T-cell (primary cell): ENCODE measurements at regions of chr1 and their contacts with region 1.

Region 1: GRCh38 chr1:11719313-11720032 is 16.5 kb upstream of the AGTRAP start:
- DNase-seq: peak; percentile 67 to 94 (median 83)
- ATAC-seq: peak; percentile 89 to 92 (median 91)
- H3K4me3 ChIP-seq: peak overlapping the region; percentile 61 to 65
- H3K4me3 Mint-ChIP-seq: peak overlapping the region; percentile 79 to 88 (median 83)
- H3K27ac ChIP-seq: peak overlapping the region; percentile 85
- H3K27ac Mint-ChIP-seq: peak overlapping the region; percentile 95
- H3K4me1 ChIP-seq: peaks cover 0 to 19% of the 10 kb centered on the region in 2 experiments
- H3K4me1 Mint-ChIP-seq: peaks cover 12 to 15% (median 14%) of the 10 kb centered on the region in 3 donors
- H3K27me3 ChIP-seq: no peaks in the 10 kb centered on the region
- H3K27me3 Mint-ChIP-seq: no peaks in the 10 kb centered on the region

Region 2: DNA sequence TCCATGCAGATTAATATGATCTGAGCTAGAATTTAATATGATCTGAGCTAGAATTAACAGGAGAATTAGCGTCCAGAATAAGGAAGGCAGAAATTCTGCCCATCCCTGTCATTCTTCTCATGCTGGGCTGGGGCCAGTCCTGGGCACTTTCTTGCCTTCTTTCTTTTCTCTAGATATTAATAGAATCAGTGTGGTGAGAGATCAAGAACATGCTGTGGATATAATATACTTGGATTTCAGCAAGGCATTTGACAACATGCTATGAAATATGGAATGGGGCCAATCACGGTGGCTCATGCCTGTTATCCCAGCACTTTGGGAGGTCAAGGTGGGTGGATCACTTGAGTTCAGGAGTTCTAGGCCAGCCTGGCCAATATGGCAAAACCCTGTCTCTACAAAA is 428.4 kb before region 1 on chr1:
- CTCF ChIA-PET with region 1: no interaction called
- POLR2A ChIA-PET with region 1: interaction called in 1 of 2 experiments, 10 read pairs
- DNase-seq: no peak
- ATAC-seq: no peak
- H3K4me3 ChIP-seq: peak overlapping the region in 1 of 2 donors; percentile 27
- H3K4me3 Mint-ChIP-seq: peak overlapping the region in 1 of 3 donors; percentile 54
- H3K27ac ChIP-seq: no peak overlapping the region
- H3K27ac Mint-ChIP-seq: peak overlapping the region; percentile 90
- H3K4me1 ChIP-seq: peaks cover 29 to 41% of the 10 kb centered on the region in 2 experiments
- H3K4me1 Mint-ChIP-seq: peaks cover 65 to 75% (median 75%) of the 10 kb centered on the region in 3 donors
- H3K27me3 ChIP-seq: no peaks in the 10 kb centered on the region
- H3K27me3 Mint-ChIP-seq: no peaks in the 10 kb centered on the region

Region 3: DNA sequence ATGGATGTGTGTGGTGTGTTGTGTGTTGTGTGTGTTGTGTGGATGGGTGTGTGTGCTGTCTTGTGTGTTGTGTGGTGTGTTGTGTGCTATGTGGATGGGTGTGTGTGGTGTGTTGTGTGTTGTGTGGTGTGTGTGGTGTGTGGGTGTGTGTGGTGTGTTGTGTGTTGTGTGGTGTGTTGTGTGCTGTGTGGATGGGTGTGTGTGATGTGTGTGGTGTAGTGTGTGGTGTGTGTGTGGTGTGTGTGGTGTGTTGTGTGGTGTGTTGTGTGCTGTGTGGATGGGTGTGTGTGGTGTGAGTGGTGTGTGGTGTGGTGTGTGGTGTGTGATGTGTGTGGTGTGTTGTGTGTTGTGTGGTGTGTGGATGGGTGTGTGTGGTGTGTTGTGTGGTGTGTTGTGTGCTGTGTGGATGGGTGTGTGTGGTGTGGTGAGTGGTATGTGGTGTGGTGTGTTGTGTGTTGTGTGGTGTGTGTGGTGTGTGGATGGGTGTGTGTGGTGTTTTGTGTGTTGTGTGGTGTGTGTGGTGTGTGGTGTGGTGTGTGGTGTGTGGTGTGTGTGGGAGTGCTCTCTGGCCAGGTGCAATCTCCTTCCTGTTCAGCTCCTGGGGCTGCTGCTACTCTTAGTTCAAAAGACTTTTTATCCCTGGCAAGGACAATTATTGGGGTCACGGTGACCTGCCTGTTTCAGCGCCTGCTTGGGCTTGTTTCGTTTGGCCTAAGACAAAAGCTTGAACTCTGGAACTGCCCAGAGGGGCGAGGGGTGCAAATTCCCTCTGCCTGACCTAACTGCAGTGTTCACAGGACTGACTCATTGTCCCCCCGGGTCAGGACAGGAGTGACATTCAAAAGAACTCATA is 345.4 kb before region 1 on chr1:
- CTCF ChIA-PET with region 1: no interaction called
- POLR2A ChIA-PET with region 1: interaction called in 1 of 2 experiments, 11 read pairs
- DNase-seq: no peak
- ATAC-seq: no peak
- H3K4me3 ChIP-seq: no peak overlapping the region
- H3K4me3 Mint-ChIP-seq: no peak overlapping the region
- H3K27ac ChIP-seq: no peak overlapping the region
- H3K27ac Mint-ChIP-seq: no peak overlapping the region
- H3K4me1 ChIP-seq: peaks cover 0 to 6% of the 10 kb centered on the region in 2 experiments
- H3K4me1 Mint-ChIP-seq: peaks cover 2 to 16% (median 15%) of the 10 kb centered on the region in 3 donors
- H3K27me3 ChIP-seq: peaks cover 0 to 5% of the 10 kb centered on the region in 2 experiments
- H3K27me3 Mint-ChIP-seq: peaks cover 5 to 9% of the 10 kb centered on the region in 2 donors

Region 4: DNA sequence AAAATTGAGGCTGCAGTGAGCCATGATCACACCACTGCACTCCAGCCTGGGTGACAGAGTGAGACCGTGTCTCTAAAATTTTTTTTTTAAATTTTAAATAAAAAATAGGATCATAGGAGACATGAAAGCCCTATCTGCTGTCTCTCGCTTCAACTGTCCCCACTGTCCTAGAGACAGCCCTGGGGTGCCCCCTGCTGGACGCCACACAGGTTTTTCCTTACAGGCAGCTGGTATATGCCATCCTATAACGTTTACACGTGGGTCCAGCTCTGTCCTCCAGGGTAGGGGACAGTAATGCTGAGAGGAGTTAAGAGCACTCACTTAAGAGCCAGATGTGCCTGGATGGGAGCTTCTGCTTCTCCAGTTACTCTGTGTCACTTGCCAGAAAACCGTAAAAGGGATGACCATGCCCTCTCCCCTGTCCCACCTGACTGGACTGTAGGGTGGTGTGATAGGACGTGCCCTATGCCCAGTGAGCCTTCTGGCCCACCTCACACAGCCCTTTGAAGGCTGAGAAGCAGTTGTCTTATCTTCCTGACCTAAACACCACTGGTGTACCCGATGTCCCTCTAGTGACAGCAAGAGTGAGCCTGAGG is 73.7 kb before region 1 on chr1:
- CTCF ChIA-PET with region 1: interaction called, 3 to 56 read pairs
- POLR2A ChIA-PET with region 1: no interaction called
- DNase-seq: peak; percentile 54 to 85 (median 74)
- ATAC-seq: peak; percentile 43 to 59 (median 52)
- H3K4me3 ChIP-seq: no peak overlapping the region
- H3K4me3 Mint-ChIP-seq: no peak overlapping the region
- H3K27ac ChIP-seq: no peak overlapping the region
- H3K27ac Mint-ChIP-seq: no peak overlapping the region
- H3K4me1 ChIP-seq: peaks cover 2 to 22% of the 10 kb centered on the region in 2 experiments
- H3K4me1 Mint-ChIP-seq: peaks cover 11 to 20% (median 15%) of the 10 kb centered on the region in 3 donors
- H3K27me3 ChIP-seq: peaks cover 0 to 22% of the 10 kb centered on the region in 2 experiments
- H3K27me3 Mint-ChIP-seq: no peaks in the 10 kb centered on the region

Region 5: DNA sequence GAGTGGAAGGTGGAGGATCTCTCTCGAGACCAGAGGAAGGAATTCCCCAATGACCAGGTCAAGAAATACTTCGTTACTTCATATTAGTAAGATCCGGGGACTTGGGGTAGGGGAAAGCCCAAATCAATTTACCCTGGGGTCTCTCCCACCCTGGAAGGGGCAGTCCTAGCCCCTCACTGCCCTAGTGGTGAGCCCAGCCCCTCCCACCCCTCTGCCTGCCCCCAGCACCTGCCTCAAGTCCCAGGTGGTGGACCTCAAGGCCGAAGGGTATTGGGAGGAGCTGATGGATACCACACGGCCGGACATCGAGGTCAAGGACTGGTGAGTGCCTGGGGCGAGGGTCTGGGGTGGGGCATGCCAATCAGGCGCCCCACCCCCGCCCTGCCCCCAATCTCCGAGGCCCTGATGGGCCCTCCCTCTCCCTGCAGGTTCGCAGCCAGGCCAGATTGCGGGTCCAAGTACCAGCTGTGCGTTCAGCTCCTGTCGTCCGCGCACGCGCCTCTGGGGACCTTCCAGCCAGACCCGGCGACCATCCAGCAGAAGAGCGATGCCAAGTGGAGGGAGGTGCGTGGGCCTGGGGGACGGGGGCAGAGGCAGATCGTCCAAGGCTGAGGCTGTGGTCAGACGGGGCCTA is 61.0 kb before region 1 on chr1:
- CTCF ChIA-PET with region 1: interaction called in 1 of 2 experiments, 56 read pairs
- POLR2A ChIA-PET with region 1: no interaction called
- DNase-seq: no peak
- ATAC-seq: no peak
- H3K4me3 ChIP-seq: no peak overlapping the region
- H3K4me3 Mint-ChIP-seq: no peak overlapping the region
- H3K27ac ChIP-seq: no peak overlapping the region
- H3K27ac Mint-ChIP-seq: no peak overlapping the region
- H3K4me1 ChIP-seq: peaks cover 8 to 23% of the 10 kb centered on the region in 2 experiments
- H3K4me1 Mint-ChIP-seq: peaks cover 7 to 13% (median 12%) of the 10 kb centered on the region in 3 donors
- H3K27me3 ChIP-seq: no peaks in the 10 kb centered on the region
- H3K27me3 Mint-ChIP-seq: no peaks in the 10 kb centered on the region

Region 6: GRCh38 chr1:11735854-11736745 is 16.6 kb after region 1 on chr1 and contains the start of gene AGTRAP:
- CTCF ChIA-PET with region 1: interaction called in 1 of 2 experiments, 25 read pairs
- POLR2A ChIA-PET with region 1: interaction called in 1 of 2 experiments, 5 read pairs
- DNase-seq: peak; percentile 65 to 93 (median 79)
- ATAC-seq: peak; percentile 72 to 80 (median 76)
- H3K4me3 ChIP-seq: peak within 1 kb of the TSS; percentile 92 to 93
- H3K4me3 Mint-ChIP-seq: peak within 1 kb of the TSS; percentile 90 to 93 (median 92)
- H3K27ac ChIP-seq: peak within 1 kb of the TSS; percentile 66
- H3K27ac Mint-ChIP-seq: peak within 1 kb of the TSS; percentile 82 to 83
- H3K4me1 ChIP-seq: peaks cover 34 to 73% of the 10 kb centered on the region in 2 experiments
- H3K4me1 Mint-ChIP-seq: peaks cover 66 to 76% (median 70%) of the 10 kb centered on the region in 3 donors
- H3K27me3 ChIP-seq: no peaks in the 10 kb centered on the region
- H3K27me3 Mint-ChIP-seq: no peaks in the 10 kb centered on the region
- total RNA-seq, gene AGTRAP: 15.8 to 30.4 (median 19.5) TPM